ENCODE measurements at regions of chr12 and their contacts with region 1.

Region 1: DNA sequence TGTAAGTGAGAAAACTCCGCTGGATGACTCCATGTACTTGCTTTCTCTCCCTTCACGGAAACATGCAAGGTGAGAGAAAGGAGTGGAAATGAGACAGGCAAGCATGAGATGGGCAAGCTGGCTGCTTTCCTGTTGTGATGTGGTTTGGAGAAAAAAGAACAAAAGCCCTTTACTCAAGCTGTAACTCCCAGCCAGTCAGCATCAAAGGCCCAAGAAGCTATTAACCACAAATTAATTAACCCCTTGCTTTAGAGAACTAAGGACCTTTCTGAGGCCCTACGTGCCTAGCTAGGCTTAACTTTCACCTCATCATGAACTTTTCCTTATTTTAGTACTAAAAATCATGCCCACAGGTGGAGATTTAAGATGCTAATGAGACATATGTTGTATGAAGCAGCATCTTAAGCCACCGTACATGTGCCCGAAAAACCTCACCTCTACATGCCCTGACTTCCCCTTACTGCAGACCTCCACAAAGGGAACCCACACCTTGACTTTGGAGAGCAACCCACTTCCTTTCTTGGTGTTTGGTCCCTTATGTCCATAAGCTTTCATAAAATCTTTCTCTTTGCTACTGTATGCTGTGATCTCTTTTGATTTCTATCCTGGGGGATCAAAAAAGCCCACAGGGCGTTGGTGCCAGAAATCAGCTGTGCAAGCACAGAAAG is 87.0 kb downstream of the GALNT8 start:
- DNase-seq: no peak
- ATAC-seq: peak; percentile 23
- H3K4me3 Mint-ChIP-seq: no peak overlapping the region
- H3K27ac Mint-ChIP-seq: peak overlapping the region; percentile 10
- H3K4me1 Mint-ChIP-seq: peaks cover 45% of the 10 kb centered on the region
- H3K27me3 Mint-ChIP-seq: peaks cover 43% of the 10 kb centered on the region

Region 2: DNA sequence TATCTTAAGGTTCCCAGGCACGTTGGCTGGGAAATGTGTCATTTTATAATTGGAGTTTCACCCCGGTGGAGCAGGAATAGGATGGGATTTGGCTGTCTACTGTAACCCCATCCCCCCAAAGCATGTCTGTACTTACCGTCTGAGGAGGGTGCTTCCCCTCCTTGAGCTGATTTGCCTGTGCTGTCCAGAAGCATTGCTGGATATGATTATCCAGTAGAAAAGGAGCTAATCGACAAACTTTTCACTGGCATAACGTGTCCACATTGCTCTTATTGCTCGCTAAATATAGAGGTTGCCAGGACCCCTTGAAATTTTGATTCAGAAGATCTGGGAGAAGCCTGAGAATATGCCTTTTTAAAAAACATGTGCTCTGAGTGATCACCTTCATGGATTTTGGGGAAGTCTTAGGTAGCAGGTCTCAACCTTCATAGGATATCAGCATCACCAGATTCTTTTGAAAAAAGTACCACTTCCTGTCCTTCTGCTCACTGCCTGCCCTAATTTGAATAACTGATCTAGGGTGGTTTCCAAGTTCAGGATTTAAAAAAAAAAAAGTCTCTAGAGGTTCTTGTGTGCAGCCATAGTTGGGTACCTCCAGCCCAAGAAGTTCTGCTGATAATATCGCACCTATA is 22.0 kb after region 1 on chr12:
- CTCF ChIA-PET with region 1: interaction called, 3 read pairs
- POLR2A ChIA-PET with region 1: interaction called, 3 read pairs
- intact Hi-C with region 1: loop called in 1 of 2 experiments (anchors 2 kb)
- DNase-seq: no peak
- ATAC-seq: peak; percentile 85
- H3K4me3 Mint-ChIP-seq: peak overlapping the region; percentile 67
- H3K27ac Mint-ChIP-seq: peak overlapping the region; percentile 91
- H3K4me1 Mint-ChIP-seq: peaks cover 67% of the 10 kb centered on the region
- H3K27me3 Mint-ChIP-seq: no peaks in the 10 kb centered on the region

Region 3: DNA sequence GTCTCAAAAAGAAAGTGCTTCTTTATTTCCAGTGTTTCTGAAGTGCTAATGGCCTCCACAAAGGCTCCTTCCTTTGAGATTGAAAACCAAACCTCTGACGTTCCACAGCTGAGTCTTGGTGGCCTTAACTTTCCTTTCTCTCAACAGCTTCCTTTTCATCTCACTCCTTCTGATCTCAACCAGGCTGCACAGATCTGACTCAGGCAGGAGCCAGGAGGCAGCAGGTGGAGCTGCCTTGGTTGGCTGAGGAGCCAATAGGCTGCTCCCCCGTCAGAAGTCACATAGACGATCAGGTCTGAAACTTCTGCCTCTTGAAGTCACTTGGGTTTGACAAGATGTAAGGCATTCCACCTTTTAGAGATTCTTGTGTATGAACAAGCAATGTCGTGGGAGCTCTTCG is 227.4 kb after region 1 on chr12:
- CTCF ChIA-PET with region 1: no interaction called
- POLR2A ChIA-PET with region 1: no interaction called
- intact Hi-C with region 1: loop called in 1 of 2 experiments (anchors 1 kb)
- DNase-seq: peak; percentile 71
- ATAC-seq: peak; percentile 99
- H3K4me3 Mint-ChIP-seq: no peak overlapping the region
- H3K27ac Mint-ChIP-seq: no peak overlapping the region
- H3K4me1 Mint-ChIP-seq: peaks cover 8% of the 10 kb centered on the region
- H3K27me3 Mint-ChIP-seq: peaks cover 9% of the 10 kb centered on the region

Region 4: GRCh38 chr12:5442251-5443006 is 635.2 kb after region 1 on chr12:
- CTCF ChIA-PET with region 1: no interaction called
- POLR2A ChIA-PET with region 1: no interaction called
- intact Hi-C with region 1: no loop called
- DNase-seq: no peak
- ATAC-seq: no peak
- H3K4me3 Mint-ChIP-seq: no peak overlapping the region
- H3K27ac Mint-ChIP-seq: no peak overlapping the region
- H3K4me1 Mint-ChIP-seq: no peaks in the 10 kb centered on the region
- H3K27me3 Mint-ChIP-seq: peaks cover 35% of the 10 kb centered on the region

Measured in activated CD4-positive, alpha-beta T cell treated with anti-CD3 and anti-CD28 coated beads for 36 hours (primary cell).